Right ventricle myocardium superior (tissue), 1 donor: ENCODE measurements at regions of chr17 and their contacts with region 1.

Region 1: DNA sequence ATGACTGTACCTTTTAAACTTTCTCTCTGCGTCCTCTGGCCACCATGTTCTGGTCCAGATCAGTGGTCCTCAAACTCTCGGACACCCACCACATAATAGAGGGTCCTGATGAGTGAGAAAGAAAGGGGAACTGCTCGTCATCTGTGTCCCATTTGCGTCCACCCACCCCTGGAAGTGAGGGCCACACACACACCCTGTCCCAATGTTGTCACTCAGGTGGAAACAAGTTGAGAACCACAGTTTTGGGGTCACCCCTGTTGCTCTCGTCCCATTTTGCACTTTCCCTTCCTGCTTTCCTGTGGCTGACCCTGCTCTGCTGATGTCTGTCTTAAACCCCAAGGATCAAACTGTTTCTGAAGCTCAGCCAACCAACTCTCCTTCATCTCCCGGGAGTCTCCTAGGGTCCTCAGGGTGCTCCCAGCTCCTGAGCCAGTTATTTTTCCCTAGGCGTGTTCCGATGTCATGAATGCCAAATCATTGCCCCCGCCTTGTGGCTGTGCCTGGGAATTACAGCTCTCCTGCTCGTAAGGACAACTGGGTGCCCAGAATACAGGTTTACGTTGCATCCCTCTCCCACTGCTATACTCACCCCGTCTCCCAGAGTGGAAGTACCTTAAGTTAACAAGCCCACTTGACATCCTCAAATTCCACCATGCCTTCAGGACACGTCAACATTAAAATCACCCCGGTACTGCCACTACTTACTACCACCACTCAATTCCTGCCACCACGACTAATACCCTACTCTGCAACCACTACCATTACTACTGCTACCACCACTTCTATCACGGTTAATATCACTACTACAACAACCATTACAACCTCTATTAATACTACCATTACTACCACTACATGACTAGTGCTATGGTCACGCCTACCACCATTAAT is 26.0 kb upstream of the HNF1B start:
- DNase-seq: peak; percentile 51
- ATAC-seq: peak; percentile 55

Region 2: GRCh38 chr17:37650419-37651003 is 120.4 kb before region 1 on chr17:
- intact Hi-C with region 1: loop called (anchors 5 kb)
- DNase-seq: no peak
- ATAC-seq: no peak